Activated T-helper 1 cell treated with anti-CD3 and anti-CD28 coated beads, Interleukin-12 subunit alpha, Interleukin-12 subunit beta, Interleukin-2, Interleukin-4 antibody, amounts not matched to agents 30 ng/mL and 10 ng/mL and 1 ng/mL, durations not matched to agents 14 hours and 24 hours and 36 hours (primary cell): ENCODE measurements at regions of chr9 and their contacts with region 1.

Region 1: GRCh38 chr9:34458013-34458958 is at the starts of genes DNAI1 and FAM219A:
- DNase-seq: peak; percentile 99
- H3K4me3 Mint-ChIP-seq: peak within 1 kb of the TSS; percentile 91
- H3K27ac Mint-ChIP-seq: peak within 1 kb of the TSS; percentile 85
- H3K4me1 Mint-ChIP-seq: peaks cover 47% of the 10 kb centered on the region
- H3K27me3 Mint-ChIP-seq: peaks cover 11% of the 10 kb centered on the region
- total RNA-seq, gene DNAI1: not detected in 2 replicates
- total RNA-seq, gene FAM219A: 14.7 and 16.5 TPM in 2 replicates

Region 2: DNA sequence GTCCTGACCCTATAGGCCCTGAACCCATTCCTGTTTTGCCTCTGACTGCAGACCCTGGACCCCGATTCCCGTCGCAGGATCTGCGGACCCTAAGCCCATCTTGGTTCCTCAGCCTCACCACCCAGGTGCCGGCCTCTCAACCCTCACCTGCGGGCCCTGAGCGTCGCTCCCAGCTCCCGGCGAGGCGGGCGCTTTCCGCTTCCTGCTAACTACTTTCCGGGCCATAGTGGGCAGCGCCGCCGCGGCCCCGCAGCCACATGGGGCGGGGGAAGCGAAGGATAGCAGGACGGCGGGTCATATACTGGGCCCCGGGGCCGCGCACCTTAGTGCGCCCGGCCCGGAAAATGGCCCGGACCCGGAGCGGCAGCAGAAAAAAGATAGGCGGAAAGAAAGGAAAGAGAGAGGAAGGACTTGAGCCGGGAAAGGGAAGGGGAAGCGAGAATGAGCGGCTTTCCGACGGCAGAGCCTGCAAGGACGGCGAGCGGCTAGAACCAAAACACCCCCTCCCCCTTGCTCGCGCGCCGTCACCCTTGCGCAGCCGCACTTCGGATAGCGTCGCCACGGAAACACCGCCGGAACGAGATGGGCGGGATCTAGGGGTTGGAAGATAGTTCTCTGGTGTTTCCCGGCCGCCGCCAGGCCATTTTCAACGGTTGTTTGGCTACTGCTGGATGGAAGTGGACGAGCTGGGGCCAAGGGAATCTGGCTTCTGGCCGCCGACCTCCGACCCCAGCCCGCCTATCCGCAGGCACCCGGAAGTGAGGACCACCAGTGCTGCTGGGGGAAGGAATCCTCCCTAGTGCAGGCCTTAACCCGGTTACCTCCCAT is 331.9 kb before region 1 on chr9 and contains the start of gene DCAF12:
- intact Hi-C with region 1: loop called (anchors 10 kb)
- DNase-seq: peak; percentile 89
- H3K4me3 Mint-ChIP-seq: peak within 1 kb of the TSS; percentile 96
- H3K27ac Mint-ChIP-seq: peak within 1 kb of the TSS; percentile 96
- H3K4me1 Mint-ChIP-seq: peaks cover 43% of the 10 kb centered on the region
- H3K27me3 Mint-ChIP-seq: no peaks in the 10 kb centered on the region
- total RNA-seq, gene DCAF12: 49.7 and 52.8 TPM in 2 replicates

Region 3: DNA sequence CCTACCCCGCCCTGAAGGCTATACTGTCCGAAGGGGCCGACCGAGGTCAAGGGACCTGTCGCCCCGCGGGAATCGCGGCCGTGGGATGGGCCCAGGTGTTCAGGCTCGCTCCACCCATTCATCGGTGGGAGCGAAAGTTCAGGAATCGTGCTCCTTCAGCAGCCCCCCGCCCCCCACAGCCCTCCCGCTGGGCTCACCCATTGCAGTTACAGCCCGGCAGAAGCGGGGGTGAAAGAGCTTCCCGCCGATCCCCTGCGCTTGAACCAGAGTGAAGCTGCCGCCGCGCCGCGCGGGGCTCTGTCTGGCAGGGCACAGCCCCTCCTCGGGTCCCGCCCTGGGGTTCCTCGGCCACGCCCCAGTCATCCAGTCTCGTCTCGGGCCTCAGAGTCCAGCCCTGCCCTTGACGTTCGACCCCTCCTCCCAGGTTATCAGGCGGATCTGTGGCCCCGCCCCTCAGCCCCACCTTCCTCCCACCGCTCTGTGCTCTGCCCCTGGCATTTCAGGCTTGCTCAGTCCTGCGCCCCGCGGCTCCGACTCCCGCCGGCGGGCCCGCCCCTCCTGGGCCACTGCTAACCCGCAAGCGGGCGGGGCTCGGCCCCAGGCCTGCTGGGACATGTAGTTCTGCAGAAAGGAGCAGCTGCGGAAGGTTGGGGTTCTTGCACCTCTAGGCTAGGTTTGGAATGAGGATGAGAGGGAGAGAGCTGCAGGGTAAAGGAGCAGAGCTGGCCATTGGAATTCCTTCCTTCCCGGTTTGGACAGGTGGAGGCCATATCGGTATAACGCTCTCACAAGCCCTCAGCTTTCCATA is 81.5 kb before region 1 on chr9 and contains the start of gene MYORG:
- intact Hi-C with region 1: loop called (anchors 1 kb)
- DNase-seq: peak; percentile 97
- H3K4me3 Mint-ChIP-seq: peak within 1 kb of the TSS; percentile 88
- H3K27ac Mint-ChIP-seq: peak within 1 kb of the TSS; percentile 32
- H3K4me1 Mint-ChIP-seq: peaks cover 45% of the 10 kb centered on the region
- H3K27me3 Mint-ChIP-seq: peaks cover 13% of the 10 kb centered on the region
- total RNA-seq, gene MYORG: 1.0 and 1.9 TPM in 2 replicates

Region 4: GRCh38 chr9:34522971-34523797 is 64.9 kb after region 1 on chr9 and contains the start of gene ENHO:
- intact Hi-C with region 1: loop called (anchors 1 kb)
- DNase-seq: peak; percentile 91
- H3K4me3 Mint-ChIP-seq: peak within 1 kb of the TSS; percentile 73
- H3K27ac Mint-ChIP-seq: peak within 1 kb of the TSS; percentile 75
- H3K4me1 Mint-ChIP-seq: peaks cover 13% of the 10 kb centered on the region
- H3K27me3 Mint-ChIP-seq: peaks cover 49% of the 10 kb centered on the region
- total RNA-seq, gene ENHO: not detected in 2 replicates

Region 5: GRCh38 chr9:34637356-34638137 is 179.3 kb after region 1 on chr9 and contains the start of gene SIGMAR1:
- intact Hi-C with region 1: loop called (anchors 2 kb)
- DNase-seq: peak; percentile 94
- H3K4me3 Mint-ChIP-seq: peak within 1 kb of the TSS; percentile 97
- H3K27ac Mint-ChIP-seq: peak within 1 kb of the TSS; percentile 88
- H3K4me1 Mint-ChIP-seq: peaks cover 39% of the 10 kb centered on the region
- H3K27me3 Mint-ChIP-seq: no peaks in the 10 kb centered on the region
- total RNA-seq, gene SIGMAR1: 128 and 130 TPM in 2 replicates

Region 6: DNA sequence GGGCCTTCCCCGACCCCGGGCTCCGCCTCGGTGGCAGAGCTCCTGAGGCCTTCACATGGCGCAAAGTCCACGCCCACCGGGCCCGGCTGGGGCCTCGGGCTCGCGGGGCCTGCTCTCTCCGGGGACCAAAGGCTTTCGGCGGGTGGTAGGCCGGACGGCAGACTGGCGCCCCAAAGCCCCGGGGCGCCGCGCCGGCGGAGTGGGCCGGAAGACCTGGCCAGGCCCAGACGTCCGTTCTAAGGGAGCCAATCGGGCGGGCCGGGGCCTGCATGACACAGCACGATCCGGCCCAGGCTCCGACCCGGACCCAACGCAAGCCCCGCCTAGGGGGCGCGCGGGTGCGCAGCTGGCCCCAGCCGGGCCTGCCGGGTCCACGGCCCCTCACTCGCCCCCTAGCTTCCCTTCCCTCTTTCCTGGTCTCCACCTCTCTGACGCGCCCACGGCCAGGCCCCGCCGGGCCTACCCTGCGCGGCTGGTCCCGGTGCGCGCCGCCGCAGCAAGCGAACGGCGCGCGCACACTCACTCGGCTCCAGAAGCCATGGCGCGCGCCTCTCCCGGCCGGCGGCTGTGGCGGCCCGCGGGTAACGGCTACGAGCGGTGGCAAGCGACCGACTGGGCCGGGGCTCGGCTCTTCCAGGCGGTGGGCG is 613.7 kb after region 1 on chr9:
- intact Hi-C with region 1: loop called (anchors 10 kb)
- DNase-seq: peak; percentile 72
- H3K4me3 Mint-ChIP-seq: peak overlapping the region; percentile 95
- H3K27ac Mint-ChIP-seq: peak overlapping the region; percentile 92
- H3K4me1 Mint-ChIP-seq: peaks cover 55% of the 10 kb centered on the region
- H3K27me3 Mint-ChIP-seq: no peaks in the 10 kb centered on the region